ENCODE measurements at regions of chr18 and their contacts with region 1.

Region 1: GRCh38 chr18:50374753-50375391 is at the start of gene SKA1:
- DNase-seq: peak; percentile 96
- ATAC-seq: peak; percentile 99
- H3K4me3 Mint-ChIP-seq: peak within 1 kb of the TSS; percentile 83
- H3K27ac Mint-ChIP-seq: peak within 1 kb of the TSS; percentile 79
- H3K4me1 Mint-ChIP-seq: peaks cover 2% of the 10 kb centered on the region
- H3K27me3 Mint-ChIP-seq: peaks cover under 1% of the 10 kb centered on the region
- total RNA-seq, gene SKA1: 38.6 to 48.3 TPM

Region 2: DNA sequence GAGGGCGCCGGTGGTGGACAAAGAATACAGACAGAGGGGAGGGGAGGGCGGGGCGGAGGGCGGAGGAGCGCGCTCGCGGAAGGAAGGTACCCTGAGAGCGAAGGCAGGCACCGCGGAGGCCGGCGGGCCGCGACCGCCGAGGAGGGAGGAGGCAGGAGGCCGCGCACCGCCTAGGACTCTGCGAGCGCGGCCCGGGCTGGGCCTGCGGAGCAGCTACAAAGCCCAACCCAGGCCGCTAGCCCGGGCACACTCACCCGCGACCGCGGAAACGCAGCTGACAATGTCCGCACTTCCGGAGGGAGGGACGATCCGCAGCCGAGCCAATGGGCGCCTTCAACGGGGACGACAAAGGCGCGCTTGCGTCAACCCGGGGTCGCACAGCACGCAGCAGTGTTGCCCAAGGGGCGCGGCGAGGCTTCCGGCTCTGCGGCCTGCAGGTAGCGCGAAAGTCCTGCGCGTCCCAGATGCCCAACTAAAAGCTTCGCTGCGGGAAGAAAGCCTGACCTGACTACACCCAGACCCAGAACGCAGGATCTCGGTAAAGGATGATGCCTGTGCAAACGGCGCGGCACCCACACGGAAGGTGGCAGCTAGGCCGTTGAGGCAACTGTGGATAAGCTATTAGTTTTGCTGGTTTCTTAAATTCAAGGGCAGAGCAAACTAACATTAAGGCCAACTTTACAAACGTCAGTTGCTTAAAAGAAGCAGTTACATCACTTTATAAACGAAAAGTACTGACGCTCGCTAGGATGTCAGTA is 887.7 kb before region 1 on chr18 and contains the start of gene C18orf32:
- CTCF ChIA-PET with region 1: no interaction called
- POLR2A ChIA-PET with region 1: no interaction called
- intact Hi-C with region 1: loop called (anchors 1 to 10 kb)
- DNase-seq: peak; percentile 96
- ATAC-seq: peak; percentile 92
- H3K4me3 Mint-ChIP-seq: peak within 1 kb of the TSS; percentile 95
- H3K27ac Mint-ChIP-seq: peak within 1 kb of the TSS; percentile 100
- H3K4me1 Mint-ChIP-seq: peaks cover 60% of the 10 kb centered on the region
- H3K27me3 Mint-ChIP-seq: no peaks in the 10 kb centered on the region
- total RNA-seq, gene C18orf32: 12.7 to 20.0 TPM

Region 3: GRCh38 chr18:50281295-50281971 is 93.4 kb before region 1 on chr18 and contains the start of gene MBD1:
- CTCF ChIA-PET with region 1: no interaction called
- POLR2A ChIA-PET with region 1: interaction called, 3 read pairs
- intact Hi-C with region 1: loop called (anchors 1 kb)
- DNase-seq: peak; percentile 97
- ATAC-seq: peak; percentile 91
- H3K4me3 Mint-ChIP-seq: peak within 1 kb of the TSS; percentile 91
- H3K27ac Mint-ChIP-seq: peak within 1 kb of the TSS; percentile 79
- H3K4me1 Mint-ChIP-seq: peaks cover 35% of the 10 kb centered on the region
- H3K27me3 Mint-ChIP-seq: no peaks in the 10 kb centered on the region
- total RNA-seq, gene MBD1: 62.2 to 70.5 TPM

Region 4: GRCh38 chr18:50307738-50308470 is 67.0 kb before region 1 on chr18:
- CTCF ChIA-PET with region 1: no interaction called
- POLR2A ChIA-PET with region 1: interaction called, 4 read pairs
- intact Hi-C with region 1: loop called in 1 of 2 experiments (anchors 1 kb)
- DNase-seq: peak; percentile 95
- ATAC-seq: peak; percentile 99
- H3K4me3 Mint-ChIP-seq: peak overlapping the region; percentile 73
- H3K27ac Mint-ChIP-seq: peak overlapping the region; percentile 37
- H3K4me1 Mint-ChIP-seq: peaks cover 11% of the 10 kb centered on the region
- H3K27me3 Mint-ChIP-seq: peaks cover 3% of the 10 kb centered on the region

Region 5: DNA sequence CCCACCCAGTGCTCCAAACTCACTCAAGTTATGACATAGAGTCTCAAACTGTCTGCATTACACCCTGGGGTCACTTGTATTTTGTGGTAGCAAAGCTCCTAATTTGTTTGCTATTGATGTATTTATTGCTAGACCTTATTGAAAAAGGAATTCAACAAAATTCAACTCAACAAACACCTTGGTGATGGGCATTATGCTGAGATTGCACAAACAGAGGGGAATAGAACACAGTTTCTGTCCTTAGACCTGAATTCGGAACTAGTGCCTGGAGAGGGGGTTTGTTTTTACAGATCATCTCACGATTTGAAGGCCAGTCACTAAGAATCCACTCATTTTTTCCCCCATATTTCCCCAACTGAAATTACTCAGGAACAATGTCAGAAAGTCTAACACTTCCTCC is 131.5 kb after region 1 on chr18:
- CTCF ChIA-PET with region 1: no interaction called
- POLR2A ChIA-PET with region 1: no interaction called
- intact Hi-C with region 1: no loop called
- DNase-seq: no peak
- ATAC-seq: no peak
- H3K4me3 Mint-ChIP-seq: no peak overlapping the region
- H3K27ac Mint-ChIP-seq: no peak overlapping the region
- H3K4me1 Mint-ChIP-seq: no peaks in the 10 kb centered on the region
- H3K27me3 Mint-ChIP-seq: peaks cover 21% of the 10 kb centered on the region

Region 6: GRCh38 chr18:51029694-51030536 is 655.0 kb after region 1 on chr18 and contains the start of gene SMAD4:
- CTCF ChIA-PET with region 1: no interaction called
- POLR2A ChIA-PET with region 1: no interaction called
- intact Hi-C with region 1: loop called in 1 of 2 experiments (anchors 2 kb)
- DNase-seq: peak; percentile 99
- ATAC-seq: peak; percentile 84
- H3K4me3 Mint-ChIP-seq: peak within 1 kb of the TSS; percentile 85
- H3K27ac Mint-ChIP-seq: peak within 1 kb of the TSS; percentile 94
- H3K4me1 Mint-ChIP-seq: peaks cover 55% of the 10 kb centered on the region
- H3K27me3 Mint-ChIP-seq: no peaks in the 10 kb centered on the region
- total RNA-seq, gene SMAD4: 79.3 to 89.5 TPM